H1 (cell line): ENCODE measurements at regions of chr14 and their contacts with region 1.

Region 1: DNA sequence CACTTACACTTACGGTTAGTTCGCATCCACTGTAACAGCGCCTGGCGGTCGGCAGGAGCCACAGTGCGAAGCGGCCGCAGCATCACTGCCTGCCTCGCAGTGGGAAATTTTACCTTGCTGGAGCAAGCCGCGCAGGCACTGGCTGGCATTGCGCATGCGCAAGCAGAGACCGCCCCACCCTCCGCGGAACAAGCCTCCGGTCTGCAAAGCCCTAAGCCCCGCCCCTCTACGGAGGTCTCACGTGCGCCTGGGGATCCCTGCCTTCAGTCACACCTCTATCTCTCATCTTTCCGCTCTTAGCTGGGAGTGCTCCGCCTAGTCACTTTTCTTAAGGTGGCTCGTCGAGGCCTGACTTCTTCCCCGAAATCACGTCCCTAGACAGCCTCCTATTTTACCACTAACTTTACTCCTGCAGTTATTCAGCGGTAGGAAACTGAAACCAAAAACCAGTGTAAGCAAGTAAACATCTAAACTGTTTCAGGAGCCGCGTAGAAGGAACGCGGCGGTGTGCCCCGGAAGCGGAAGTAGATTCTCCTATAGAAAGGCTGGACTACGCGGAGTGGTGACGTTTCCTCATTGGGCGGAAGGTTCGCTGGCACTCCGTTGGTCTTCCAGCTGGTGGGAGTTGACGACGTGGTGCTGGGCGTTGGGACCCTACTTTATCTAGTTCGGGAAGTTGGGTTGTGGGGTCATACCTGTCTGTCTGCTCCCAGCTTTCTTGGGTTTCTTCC is at the start of gene SRP54:
- DNase-seq: peak; percentile 98 to 99
- H3K4me3 ChIP-seq: peak within 1 kb of the TSS; percentile 76 to 84 (median 79)
- H3K27ac ChIP-seq: peak within 1 kb of the TSS; percentile 97
- H3K4me1 ChIP-seq: peaks cover 0 to 5% (median 2%) of the 10 kb centered on the region in 4 experiments; a peak in 3 of 7 replicates
- H3K27me3 ChIP-seq: no peaks in the 10 kb centered on the region
- CTCF ChIP-seq: peak in 2 of 3 experiments; percentile 35 to 51; a peak in 3 of 4 replicates
- EP300 ChIP-seq: no peak
- POLR2A ChIP-seq: peak; percentile 65 to 81
- RAD21 ChIP-seq: peak; percentile 25 to 34; a peak in 3 of 4 replicates
- total RNA-seq, gene SRP54: 60.0 and 61.2 TPM in 2 replicates

Region 2: GRCh38 chr14:34875031-34875922 is 107.3 kb before region 1 on chr14 and contains the start of gene BAZ1A:
- CTCF ChIA-PET with region 1: interaction called, 6 read pairs
- POLR2A ChIA-PET with region 1: interaction called, 14 read pairs
- DNase-seq: no peak
- H3K4me3 ChIP-seq: peak within 1 kb of the TSS; percentile 72 to 85 (median 77)
- H3K27ac ChIP-seq: peak within 1 kb of the TSS; percentile 45; the same call in 1 of the 2 replicates
- H3K4me1 ChIP-seq: peaks cover 0 to 4% (median under 1%) of the 10 kb centered on the region in 4 experiments; a peak in 2 of 7 replicates
- H3K27me3 ChIP-seq: no peaks in the 10 kb centered on the region
- CTCF ChIP-seq: no peak
- EP300 ChIP-seq: no peak
- POLR2A ChIP-seq: peak in 1 of 2 experiments; percentile 65; a peak in 2 of 3 replicates
- RAD21 ChIP-seq: no peak
- total RNA-seq, gene BAZ1A: 20.9 and 23.1 TPM in 2 replicates

Region 3: DNA sequence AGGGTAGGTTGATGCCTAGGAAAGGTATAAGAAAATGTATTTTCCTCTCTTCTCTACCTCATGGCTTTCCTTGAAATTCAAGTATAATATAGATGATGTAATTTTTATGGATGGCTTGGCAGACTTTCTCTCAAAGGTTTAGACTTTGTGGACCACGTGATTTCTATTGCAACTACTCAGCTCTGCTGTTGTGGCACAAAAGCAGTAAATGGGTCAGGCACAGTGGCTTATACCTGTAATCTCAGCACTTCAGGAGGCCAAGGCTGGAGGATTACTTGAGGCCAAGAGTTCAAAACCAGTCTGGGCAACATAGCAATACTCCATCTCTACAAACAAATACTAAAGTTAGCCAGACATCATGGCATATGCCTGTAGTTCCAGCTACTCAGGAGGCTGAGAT is 22.3 kb after region 1 on chr14:
- CTCF ChIA-PET with region 1: no interaction called
- POLR2A ChIA-PET with region 1: interaction called, 10 read pairs
- DNase-seq: no peak
- H3K4me3 ChIP-seq: no peak overlapping the region
- H3K27ac ChIP-seq: no peak overlapping the region
- H3K4me1 ChIP-seq: no peaks in the 10 kb centered on the region
- H3K27me3 ChIP-seq: no peaks in the 10 kb centered on the region
- CTCF ChIP-seq: no peak
- EP300 ChIP-seq: no peak
- POLR2A ChIP-seq: no peak
- RAD21 ChIP-seq: no peak

Region 4: GRCh38 chr14:35016568-35016967 is 34.0 kb after region 1 on chr14:
- CTCF ChIA-PET with region 1: no interaction called
- POLR2A ChIA-PET with region 1: no interaction called
- DNase-seq: no peak
- H3K4me3 ChIP-seq: no peak overlapping the region
- H3K27ac ChIP-seq: no peak overlapping the region
- H3K4me1 ChIP-seq: no peaks in the 10 kb centered on the region
- H3K27me3 ChIP-seq: no peaks in the 10 kb centered on the region
- CTCF ChIP-seq: no peak
- EP300 ChIP-seq: no peak
- POLR2A ChIP-seq: no peak
- RAD21 ChIP-seq: no peak

Region 5: DNA sequence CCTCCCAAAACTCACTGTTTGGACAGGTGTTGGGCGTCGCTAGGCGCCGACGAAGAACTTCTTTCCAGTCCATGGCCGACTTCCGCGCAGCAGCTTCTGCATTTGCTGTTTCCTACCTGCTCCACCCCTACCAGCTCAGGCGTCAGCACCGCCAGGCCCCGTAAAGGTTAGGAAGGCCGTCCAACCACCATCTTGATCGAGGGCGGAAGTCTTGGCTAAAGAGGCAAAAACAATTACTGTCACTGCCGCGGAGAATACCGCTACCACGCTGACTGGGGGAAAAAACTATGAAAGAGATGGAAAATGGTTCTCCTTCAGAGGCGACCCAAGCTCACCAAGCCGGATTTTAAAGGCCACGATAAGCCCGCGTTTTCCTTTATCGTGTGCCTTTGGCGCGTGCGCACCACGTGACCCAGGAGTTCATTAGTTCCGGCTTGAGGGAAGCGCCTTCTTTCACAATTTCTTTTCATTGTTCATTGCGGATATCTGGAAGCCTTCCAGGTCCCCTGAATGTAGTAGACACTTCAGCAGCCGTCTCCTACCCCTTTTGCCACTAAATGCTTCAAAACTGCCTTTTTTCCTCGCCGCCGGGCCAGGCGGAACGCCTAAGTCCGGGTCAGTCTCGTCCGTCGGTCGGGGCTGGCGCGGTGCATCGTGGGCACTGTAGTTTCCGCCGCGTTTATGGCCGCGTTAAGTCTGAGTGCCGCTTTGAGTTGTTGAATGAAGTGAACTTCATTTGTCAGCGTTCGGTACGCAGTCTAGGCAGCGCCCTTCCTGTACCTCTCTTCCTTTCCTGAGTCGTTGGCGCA is 139.5 kb after region 1 on chr14 and contains the starts of genes PPP2R3C and PRORP:
- CTCF ChIA-PET with region 1: no interaction called
- POLR2A ChIA-PET with region 1: interaction called, 11 read pairs
- DNase-seq: peak; percentile 87 to 95
- H3K4me3 ChIP-seq: peak within 1 kb of the TSS; percentile 90 to 97 (median 93)
- H3K27ac ChIP-seq: peak within 1 kb of the TSS; percentile 99
- H3K4me1 ChIP-seq: peaks cover 0 to 4% (median 2%) of the 10 kb centered on the region in 4 experiments; a peak in 3 of 7 replicates
- H3K27me3 ChIP-seq: no peaks in the 10 kb centered on the region
- CTCF ChIP-seq: no peak
- EP300 ChIP-seq: peak in 1 of 2 experiments; percentile 28; a peak in 1 of 3 replicates
- POLR2A ChIP-seq: peak; percentile 84 to 97
- RAD21 ChIP-seq: no peak
- total RNA-seq, gene PPP2R3C: 24.6 and 26.7 TPM in 2 replicates
- total RNA-seq, gene PRORP: 43.9 and 44.8 TPM in 2 replicates